Naive thymus-derived CD4-positive, alpha-beta T cell (primary cell): ENCODE measurements at regions of chr6 and their contacts with region 1.

Region 1: DNA sequence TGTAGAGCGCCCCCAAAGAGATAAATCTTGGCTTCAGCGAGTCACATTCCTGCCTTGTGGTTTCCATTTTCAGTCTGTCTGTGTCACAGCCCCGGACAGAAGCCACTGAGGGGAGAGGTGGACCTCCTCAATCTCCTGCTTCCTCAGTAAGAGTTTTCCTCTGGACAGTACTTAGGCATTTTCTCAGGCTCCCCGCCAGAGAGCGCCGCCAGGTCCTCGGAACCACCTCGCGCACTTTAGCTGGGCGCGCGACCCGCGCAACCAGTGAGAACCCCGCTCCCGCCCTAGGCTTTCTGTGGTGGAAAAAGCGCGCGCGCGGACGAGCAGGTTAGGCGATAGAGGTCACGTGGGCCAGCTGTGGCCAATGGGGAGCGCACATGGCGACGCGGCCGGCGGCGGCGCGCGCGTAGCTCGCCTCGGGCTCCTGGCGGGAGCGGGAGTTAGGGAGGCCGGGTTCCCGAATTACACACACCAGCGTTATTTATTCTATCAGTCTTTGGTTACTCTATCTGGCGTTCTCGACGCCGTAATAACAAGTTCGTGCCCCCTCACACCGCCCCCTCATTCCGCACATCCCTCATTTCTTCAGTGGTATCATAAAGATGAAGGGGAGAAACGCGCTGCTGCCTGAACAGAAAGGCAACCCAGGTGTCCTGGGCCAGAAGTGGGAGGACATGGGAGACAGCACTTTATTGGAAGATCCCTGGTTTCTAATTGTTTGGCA is 19.4 kb downstream of the PXT1 start:
- DNase-seq: peak; percentile 94 to 98 (median 97)
- ATAC-seq: peak; percentile 99
- H3K4me3 ChIP-seq: peak overlapping the region; percentile 70
- H3K4me3 Mint-ChIP-seq: peak overlapping the region; percentile 85 to 96 (median 94)
- H3K27ac ChIP-seq: peak overlapping the region; percentile 75
- H3K27ac Mint-ChIP-seq: peak overlapping the region; percentile 84 to 97 (median 93)
- H3K4me1 ChIP-seq: peaks cover 0 to 10% of the 10 kb centered on the region in 2 donors
- H3K4me1 Mint-ChIP-seq: peaks cover 10 to 21% (median 18%) of the 10 kb centered on the region in 7 donors
- H3K27me3 ChIP-seq: no peaks in the 10 kb centered on the region
- H3K27me3 Mint-ChIP-seq: no peaks in the 10 kb centered on the region

Region 2: GRCh38 chr6:35259194-35259947 is 1163.9 kb before region 1 on chr6 and contains the start of gene ZNF76:
- CTCF ChIA-PET with region 1: no interaction called
- POLR2A ChIA-PET with region 1: no interaction called
- intact Hi-C with region 1: loop called in 1 of 2 experiments (anchors 1 kb)
- DNase-seq: peak; percentile 89 to 93 (median 92)
- ATAC-seq: peak; percentile 88
- H3K4me3 ChIP-seq: peak within 1 kb of the TSS; percentile 65
- H3K4me3 Mint-ChIP-seq: peak within 1 kb of the TSS; percentile 85 to 99 (median 97)
- H3K27ac ChIP-seq: peak within 1 kb of the TSS; percentile 95
- H3K27ac Mint-ChIP-seq: peak within 1 kb of the TSS; percentile 89 to 99 (median 97)
- H3K4me1 ChIP-seq: peaks cover 15 to 17% of the 10 kb centered on the region in 2 donors
- H3K4me1 Mint-ChIP-seq: peaks cover 37 to 64% (median 50%) of the 10 kb centered on the region in 7 donors
- H3K27me3 ChIP-seq: no peaks in the 10 kb centered on the region
- H3K27me3 Mint-ChIP-seq: no peaks in the 10 kb centered on the region
- total RNA-seq, gene ZNF76: 44.4 to 110 (median 77.2) TPM

Region 3: DNA sequence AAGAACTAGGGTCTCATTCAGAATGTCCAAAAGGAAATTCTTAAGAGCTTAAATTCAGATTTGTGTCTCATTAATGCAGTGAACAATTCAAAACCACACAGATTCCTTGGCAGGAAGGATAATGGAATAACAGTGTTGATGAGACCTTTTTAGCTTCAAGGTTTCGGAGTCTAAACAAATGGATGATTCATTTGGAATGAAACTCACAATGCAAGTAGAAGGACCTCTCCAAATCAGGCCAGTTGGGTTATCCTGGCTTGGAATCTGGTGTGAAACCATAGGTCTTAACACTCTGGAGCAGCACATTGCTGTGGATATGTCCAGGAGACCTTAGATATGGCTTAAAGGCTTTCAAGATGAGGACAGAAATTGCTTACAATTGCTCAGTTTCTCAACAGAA is 64.4 kb after region 1 on chr6:
- CTCF ChIA-PET with region 1: no interaction called
- POLR2A ChIA-PET with region 1: no interaction called
- intact Hi-C with region 1: loop called in 1 of 2 experiments (anchors 5 kb)
- DNase-seq: no peak
- ATAC-seq: no peak
- H3K4me3 ChIP-seq: no peak overlapping the region
- H3K4me3 Mint-ChIP-seq: no peak overlapping the region
- H3K27ac ChIP-seq: no peak overlapping the region
- H3K27ac Mint-ChIP-seq: peak overlapping the region in 6 of 9 donors; percentile 9 to 68 (median 28)
- H3K4me1 ChIP-seq: no peaks in the 10 kb centered on the region
- H3K4me1 Mint-ChIP-seq: peaks cover 0 to 21% (median 5%) of the 10 kb centered on the region in 7 donors
- H3K27me3 ChIP-seq: no peaks in the 10 kb centered on the region
- H3K27me3 Mint-ChIP-seq: no peaks in the 10 kb centered on the region

Region 4: GRCh38 chr6:36576561-36576960 is 153.3 kb after region 1 on chr6:
- CTCF ChIA-PET with region 1: interaction called, 4 read pairs
- POLR2A ChIA-PET with region 1: interaction called, 7 read pairs
- intact Hi-C with region 1: loop called (anchors 1 kb)
- DNase-seq: no peak
- ATAC-seq: no peak
- H3K4me3 ChIP-seq: no peak overlapping the region
- H3K4me3 Mint-ChIP-seq: no peak overlapping the region
- H3K27ac ChIP-seq: no peak overlapping the region
- H3K27ac Mint-ChIP-seq: no peak overlapping the region
- H3K4me1 ChIP-seq: no peaks in the 10 kb centered on the region
- H3K4me1 Mint-ChIP-seq: peaks cover 0 to 16% (median 14%) of the 10 kb centered on the region in 7 donors
- H3K27me3 ChIP-seq: no peaks in the 10 kb centered on the region
- H3K27me3 Mint-ChIP-seq: no peaks in the 10 kb centered on the region